ENCODE measurements at regions of chr6 and their contacts with region 1.

Region 1: DNA sequence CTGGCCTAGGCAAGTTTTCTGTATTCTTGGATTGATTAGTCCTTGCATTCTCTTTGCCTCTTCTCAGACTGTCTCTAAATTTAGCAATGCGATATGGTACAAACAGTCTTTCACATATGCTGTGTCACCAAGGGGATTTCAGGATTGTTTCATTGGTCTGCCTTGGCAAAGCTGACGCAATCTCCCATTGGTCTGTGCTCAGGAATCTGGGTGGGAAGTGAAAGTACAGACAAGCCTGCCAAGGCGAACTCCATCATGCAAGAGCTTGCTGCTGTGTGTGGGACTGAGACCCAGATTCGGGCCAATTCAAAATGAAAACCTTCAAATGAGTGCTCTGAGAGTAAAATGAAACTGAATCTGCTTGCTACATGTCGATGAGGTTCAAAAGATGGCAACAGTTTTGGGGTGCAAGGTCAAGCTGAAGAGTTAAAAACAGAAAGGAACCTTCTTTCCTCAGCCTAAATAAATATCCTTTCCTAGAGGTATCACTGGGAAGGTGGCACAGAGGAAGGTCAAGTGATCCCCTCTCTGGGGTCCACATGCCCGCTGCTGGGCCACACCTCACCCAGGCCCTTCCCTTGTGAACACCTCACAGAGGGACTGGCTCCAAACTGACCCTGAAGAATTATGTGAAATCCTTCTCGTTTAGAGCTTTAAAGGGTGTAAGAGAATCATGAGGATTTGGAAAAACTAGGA is 198.8 kb upstream of the PREP start:
- H3K4me3 Mint-ChIP-seq: peak overlapping the region; percentile 55
- H3K27ac Mint-ChIP-seq: peak overlapping the region; percentile 86
- H3K4me1 Mint-ChIP-seq: peaks cover 13% of the 10 kb centered on the region
- H3K27me3 Mint-ChIP-seq: no peaks in the 10 kb centered on the region

Region 2: DNA sequence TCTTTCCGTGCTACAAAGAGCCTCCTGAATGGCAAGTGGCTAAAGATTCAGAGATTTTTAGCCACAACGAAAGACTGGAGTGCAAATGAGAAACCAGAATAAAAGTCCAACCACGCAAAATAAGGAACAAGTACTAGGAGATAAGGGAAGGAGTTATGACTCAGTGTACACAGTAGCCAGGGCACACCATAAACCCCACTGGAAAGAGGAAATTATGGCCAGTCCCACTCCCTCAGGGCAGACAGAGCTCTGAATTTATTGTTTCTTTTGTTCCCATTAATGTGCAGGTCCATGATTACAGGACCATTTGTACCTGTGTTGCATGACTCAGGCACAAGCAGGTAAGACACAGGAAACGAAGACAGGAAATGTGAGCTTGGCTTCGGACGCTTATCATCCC is 48.5 kb before region 1 on chr6:
- intact Hi-C with region 1: loop called (anchors 10 kb)
- H3K4me3 Mint-ChIP-seq: no peak overlapping the region
- H3K27ac Mint-ChIP-seq: peak overlapping the region; percentile 80
- H3K4me1 Mint-ChIP-seq: peaks cover 26% of the 10 kb centered on the region
- H3K27me3 Mint-ChIP-seq: peaks cover 8% of the 10 kb centered on the region

Region 3: DNA sequence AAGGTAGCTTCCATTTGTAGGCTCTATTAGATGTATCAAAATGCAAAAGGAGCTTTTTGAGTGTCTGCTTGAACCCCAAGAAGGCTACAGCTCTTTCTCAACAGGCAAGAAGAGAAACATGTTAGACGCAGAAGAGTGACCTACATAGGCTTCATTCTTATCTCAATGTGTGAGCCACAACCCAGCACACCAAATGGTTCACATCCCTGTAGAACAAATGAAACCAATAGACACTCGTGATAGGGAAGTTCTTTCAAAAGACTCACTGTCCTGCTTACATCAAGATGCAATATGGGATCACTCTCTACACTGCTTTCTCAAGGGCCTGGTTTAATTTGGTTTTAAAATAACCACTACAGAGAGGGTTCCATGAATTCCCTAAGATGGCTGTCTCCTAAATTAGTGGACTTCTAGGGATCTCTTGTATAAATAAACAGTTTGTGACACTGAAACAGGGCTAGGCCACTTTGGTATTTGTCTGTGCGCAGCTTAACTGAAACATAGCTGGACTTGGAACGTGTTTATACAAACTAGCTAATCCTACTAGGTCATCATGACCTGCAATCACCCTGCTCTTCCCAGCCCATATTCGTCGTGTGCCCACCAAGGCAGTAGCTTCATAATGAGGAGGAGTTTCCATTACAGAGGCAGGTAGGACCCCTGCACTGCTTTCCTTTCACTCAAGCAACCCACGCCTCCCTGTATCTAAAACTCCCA is 26.6 kb after region 1 on chr6:
- intact Hi-C with region 1: no loop called
- H3K4me3 Mint-ChIP-seq: no peak overlapping the region
- H3K27ac Mint-ChIP-seq: no peak overlapping the region
- H3K4me1 Mint-ChIP-seq: peaks cover 14% of the 10 kb centered on the region
- H3K27me3 Mint-ChIP-seq: peaks cover 5% of the 10 kb centered on the region

Measured in dendritic cell treated with granulocyte-macrophage colony-stimulating factor and Interleukin-4, amounts not matched to agents 40 ng/mL and 50 ng/mL, for 4 days (primary cell).